ENCODE measurements at regions of chr10 and their contacts with region 1.

Region 1: DNA sequence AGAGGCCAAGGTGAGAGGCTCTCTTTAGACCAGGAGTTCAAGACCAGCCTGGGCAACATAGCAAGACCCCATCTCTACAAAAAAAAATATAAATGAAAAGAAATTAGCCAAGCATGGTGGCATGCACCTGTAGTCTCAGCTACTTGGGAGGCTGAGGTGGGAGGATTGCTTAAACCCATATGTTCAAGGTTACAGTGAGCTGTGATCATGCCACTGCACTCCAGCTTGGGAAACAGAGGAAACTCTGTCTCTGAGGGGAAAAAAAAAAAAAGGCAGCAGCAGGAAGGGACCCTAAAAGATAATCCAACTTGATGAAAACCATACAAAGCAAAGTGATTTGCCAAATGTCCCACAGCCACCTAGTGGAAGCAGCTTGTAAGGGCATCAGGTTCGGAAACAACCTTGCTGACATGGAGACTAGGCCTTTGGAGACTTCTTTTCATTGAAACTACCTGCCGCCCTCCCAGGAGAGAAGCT is 15.6 kb upstream of the PBLD start:
- DNase-seq: peak; percentile 52
- H3K4me3 ChIP-seq: no peak overlapping the region
- H3K27ac ChIP-seq: no peak overlapping the region
- H3K4me1 ChIP-seq: peaks cover 1% of the 10 kb centered on the region
- H3K27me3 ChIP-seq: no peaks in the 10 kb centered on the region
- CTCF ChIP-seq: peak; percentile 62 to 81
- POLR2A ChIP-seq: no peak

Region 2: GRCh38 chr10:67858971-67859370 is 489.3 kb before region 1 on chr10:
- CTCF ChIA-PET with region 1: interaction called, 11 read pairs
- POLR2A ChIA-PET with region 1: no interaction called
- dilution Hi-C with region 1: no loop called
- intact Hi-C with region 1: loop called (anchors 5 kb)
- DNase-seq: no peak
- H3K4me3 ChIP-seq: no peak overlapping the region
- H3K27ac ChIP-seq: no peak overlapping the region
- H3K4me1 ChIP-seq: no peaks in the 10 kb centered on the region
- H3K27me3 ChIP-seq: no peaks in the 10 kb centered on the region
- CTCF ChIP-seq: no peak
- POLR2A ChIP-seq: no peak

Region 3: GRCh38 chr10:68331455-68332258 is 16.6 kb before region 1 on chr10 and contains the start of gene HNRNPH3:
- CTCF ChIA-PET with region 1: interaction called, 21 read pairs
- POLR2A ChIA-PET with region 1: interaction called, 4 read pairs
- dilution Hi-C with region 1: no loop called
- intact Hi-C with region 1: no loop called
- DNase-seq: peak; percentile 98
- H3K4me3 ChIP-seq: peak within 1 kb of the TSS; percentile 95 to 100 (median 99)
- H3K27ac ChIP-seq: peak within 1 kb of the TSS; percentile 91
- H3K4me1 ChIP-seq: peaks cover 15% of the 10 kb centered on the region
- H3K27me3 ChIP-seq: no peaks in the 10 kb centered on the region
- CTCF ChIP-seq: no peak
- POLR2A ChIP-seq: peak; percentile 98
- total RNA-seq, gene HNRNPH3: 146 and 151 TPM in 2 replicates

Region 4: GRCh38 chr10:68364101-68364886 is 16.0 kb after region 1 on chr10:
- CTCF ChIA-PET with region 1: interaction called, 32 read pairs
- POLR2A ChIA-PET with region 1: interaction called, 3 read pairs
- dilution Hi-C with region 1: no loop called
- intact Hi-C with region 1: no loop called
- DNase-seq: no peak
- H3K4me3 ChIP-seq: no peak overlapping the region
- H3K27ac ChIP-seq: no peak overlapping the region
- H3K4me1 ChIP-seq: no peaks in the 10 kb centered on the region
- H3K27me3 ChIP-seq: no peaks in the 10 kb centered on the region
- CTCF ChIP-seq: no peak
- POLR2A ChIP-seq: no peak

Region 5: DNA sequence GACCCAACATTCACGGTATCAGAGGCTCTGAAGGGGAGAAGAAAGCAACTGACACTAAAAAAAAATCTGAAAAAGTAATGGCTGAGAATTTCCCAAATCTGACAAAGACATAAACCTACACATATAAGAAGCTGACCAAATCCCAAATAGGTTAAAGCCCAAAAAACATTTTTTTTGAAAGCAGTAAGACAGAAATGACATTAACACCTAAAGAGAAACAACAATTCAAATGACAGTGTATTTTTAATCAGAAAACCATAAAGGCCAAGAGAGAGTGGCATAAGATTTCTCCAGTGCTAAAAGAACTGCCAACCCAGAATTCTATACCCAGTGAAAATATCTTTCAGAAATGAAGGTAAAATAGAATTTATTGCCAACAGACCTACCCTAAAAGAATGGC is 23.3 kb after region 1 on chr10:
- CTCF ChIA-PET with region 1: interaction called, 12 read pairs
- POLR2A ChIA-PET with region 1: no interaction called
- dilution Hi-C with region 1: no loop called
- intact Hi-C with region 1: no loop called
- DNase-seq: no peak
- H3K4me3 ChIP-seq: no peak overlapping the region
- H3K27ac ChIP-seq: no peak overlapping the region
- H3K4me1 ChIP-seq: no peaks in the 10 kb centered on the region
- H3K27me3 ChIP-seq: no peaks in the 10 kb centered on the region
- CTCF ChIP-seq: no peak
- POLR2A ChIP-seq: no peak

Measured in endothelial cell of umbilical vein (primary cell).